ENCODE measurements at regions of chr12 and their contacts with region 1.

Region 1: DNA sequence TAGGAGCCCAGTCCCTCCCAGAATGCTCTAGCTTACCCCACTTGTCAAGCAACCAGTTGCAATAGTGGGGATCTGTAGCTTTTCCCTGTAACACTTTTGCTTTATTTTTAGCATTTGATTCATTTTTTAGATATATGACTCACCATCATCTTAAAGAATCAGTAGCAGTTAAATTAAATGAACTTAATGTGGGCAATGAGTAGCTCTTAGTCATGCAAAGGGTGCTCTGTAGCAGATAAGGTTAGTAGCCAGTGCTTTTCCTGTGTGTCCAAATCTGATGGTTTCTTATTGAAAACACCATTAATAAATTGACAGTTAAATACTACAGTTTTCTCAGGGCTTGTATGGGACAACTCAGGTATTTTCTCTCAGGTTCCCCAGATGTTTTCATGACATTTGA is 311.8 kb downstream of the RERGL start:
- DNase-seq: no peak
- ATAC-seq: no peak

Region 2: DNA sequence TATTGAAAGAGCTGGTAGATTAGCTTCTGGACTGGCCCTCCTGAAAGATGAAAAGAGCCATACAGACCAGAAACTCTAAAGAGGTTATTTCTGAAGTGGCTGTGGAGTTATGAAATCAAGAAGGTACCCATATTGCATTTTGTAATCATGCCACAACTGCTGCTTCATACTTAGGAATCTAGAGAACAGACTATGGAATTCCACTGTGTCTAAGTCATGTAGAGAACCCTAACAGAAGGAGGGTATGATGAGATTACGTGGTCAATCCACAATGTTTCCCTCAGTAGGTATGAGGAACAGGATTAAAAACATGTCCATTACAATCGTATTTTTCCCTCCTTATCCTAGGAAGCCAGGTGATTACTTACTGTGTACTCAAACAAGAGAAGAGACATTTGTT is 397.0 kb before region 1 on chr12:
- intact Hi-C with region 1: no loop called
- DNase-seq: no peak
- ATAC-seq: no peak

Region 3: DNA sequence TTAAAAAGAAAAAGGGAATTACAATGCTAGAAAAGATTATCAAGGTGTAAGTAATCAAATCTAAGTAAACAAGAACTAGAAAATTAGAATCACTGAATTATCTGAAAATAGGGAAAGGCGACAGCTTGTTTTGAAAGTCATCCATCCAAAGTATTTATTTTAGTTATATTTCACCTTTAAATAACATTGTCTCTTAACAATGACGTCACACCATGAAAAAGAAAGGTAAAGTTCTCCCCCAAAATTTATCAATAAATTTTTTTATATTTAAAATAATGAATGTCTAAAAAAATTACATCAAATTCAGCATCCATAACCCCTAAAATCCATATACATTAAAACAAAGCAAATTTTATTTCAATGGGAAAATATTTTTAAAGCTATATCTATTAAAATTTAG is 88.6 kb after region 1 on chr12:
- intact Hi-C with region 1: loop called (anchors 5 kb)
- DNase-seq: no peak
- ATAC-seq: no peak